ENCODE measurements at regions of chr16 and their contacts with region 1.

Region 1: GRCh38 chr16:86798247-86799041 is 220.1 kb downstream of the FOXL1 start:
- DNase-seq: peak; percentile 19
- H3K4me3 ChIP-seq: no peak overlapping the region
- H3K27ac ChIP-seq: no peak overlapping the region
- H3K4me1 ChIP-seq: no peaks in the 10 kb centered on the region
- H3K27me3 ChIP-seq: peaks cover 4% of the 10 kb centered on the region
- CTCF ChIP-seq: no peak

Region 2: DNA sequence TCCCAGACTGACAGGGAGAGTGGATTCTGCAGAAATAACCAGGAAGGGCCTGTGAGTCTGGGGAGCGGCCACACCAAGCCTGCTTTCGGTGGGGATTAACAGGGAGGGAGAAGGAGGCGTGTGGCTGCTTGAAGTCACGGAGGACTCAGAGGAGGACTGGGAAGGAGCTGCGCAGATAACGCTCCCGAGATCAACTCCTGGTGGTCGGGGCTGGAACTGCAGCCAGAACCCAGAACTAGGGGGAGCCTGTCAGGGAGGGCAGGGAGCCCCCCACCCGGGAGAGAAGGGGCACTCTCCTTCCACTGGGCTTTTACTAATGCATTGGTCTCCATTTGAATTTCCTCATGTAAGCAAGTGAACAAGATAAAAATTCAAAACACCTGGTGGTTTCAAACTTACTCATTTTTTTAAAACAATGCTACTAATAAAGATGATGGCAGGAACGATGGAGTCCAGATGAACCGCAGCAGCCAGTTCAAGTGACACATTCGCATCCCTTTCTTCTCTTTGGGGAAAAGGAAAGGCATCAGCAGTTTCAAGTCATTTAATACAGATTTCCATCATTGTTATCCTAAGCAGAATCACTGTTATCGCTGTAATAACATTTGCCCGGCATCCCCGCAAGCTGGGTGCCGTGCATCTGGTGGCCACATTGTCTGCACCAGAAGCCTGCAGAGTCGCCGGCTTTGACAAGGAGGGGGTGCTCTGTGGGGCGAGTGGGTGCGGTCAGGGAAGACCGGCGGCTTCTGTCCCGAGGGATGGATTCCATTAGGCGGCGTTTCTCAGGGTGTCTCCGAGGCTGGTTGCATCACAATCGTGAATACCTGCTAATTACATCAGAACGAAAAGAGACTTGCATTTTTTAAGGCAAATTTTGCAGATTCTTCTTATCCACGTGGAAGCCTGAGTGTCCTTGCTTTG is 37.1 kb before region 1 on chr16:
- CTCF ChIA-PET with region 1: no interaction called
- dilution Hi-C with region 1: loop called (anchors 5 kb)
- in situ Hi-C with region 1: no loop called
- intact Hi-C with region 1: no loop called
- DNase-seq: peak; percentile 39
- H3K4me3 ChIP-seq: no peak overlapping the region
- H3K27ac ChIP-seq: no peak overlapping the region
- H3K4me1 ChIP-seq: peaks cover 10% of the 10 kb centered on the region
- H3K27me3 ChIP-seq: no peaks in the 10 kb centered on the region
- CTCF ChIP-seq: peak; percentile 66 to 85

Region 3: GRCh38 chr16:86819533-86819892 is 21.1 kb after region 1 on chr16:
- CTCF ChIA-PET with region 1: no interaction called
- dilution Hi-C with region 1: no loop called
- in situ Hi-C with region 1: no loop called
- intact Hi-C with region 1: no loop called
- DNase-seq: no peak
- H3K4me3 ChIP-seq: no peak overlapping the region
- H3K27ac ChIP-seq: no peak overlapping the region
- H3K4me1 ChIP-seq: peaks cover 25% of the 10 kb centered on the region
- H3K27me3 ChIP-seq: no peaks in the 10 kb centered on the region
- CTCF ChIP-seq: peak; percentile 25 to 40

Measured in mammary epithelial cell (primary cell).